ENCODE measurements at regions of chr18 and their contacts with region 1.

Region 1: DNA sequence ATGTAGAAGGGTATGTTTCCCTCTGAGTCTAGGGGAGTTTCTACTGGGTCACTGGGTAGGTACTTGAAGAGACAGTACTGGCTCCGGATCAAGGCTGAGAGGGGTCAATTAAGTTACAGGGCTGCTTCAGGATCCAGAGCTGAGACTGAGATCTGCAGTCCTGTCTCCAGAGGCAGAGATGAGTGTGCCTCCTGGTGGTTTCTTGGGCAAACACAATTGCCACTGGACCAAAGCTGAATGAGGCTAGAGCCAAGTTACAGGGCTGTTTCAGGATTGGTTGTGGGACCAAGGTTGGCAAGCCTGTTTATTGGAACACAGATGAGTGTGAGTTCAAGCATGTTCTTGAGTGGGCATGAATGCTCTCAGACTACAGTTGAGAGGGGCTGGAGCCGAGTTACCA is 157.9 kb downstream of the ADCYAP1 start:
- DNase-seq: peak; percentile 18
- H3K4me3 ChIP-seq: no peak overlapping the region
- H3K27ac ChIP-seq: no peak overlapping the region
- H3K4me1 ChIP-seq: no peaks in the 10 kb centered on the region
- H3K27me3 ChIP-seq: no peaks in the 10 kb centered on the region
- CTCF ChIP-seq: peak in 1 of 2 donors; percentile 48
- POLR2A ChIP-seq: no peak

Region 2: GRCh38 chr18:903701-904100 is 158.9 kb before region 1 on chr18:
- CTCF ChIA-PET with region 1: interaction called, 19 read pairs
- POLR2A ChIA-PET with region 1: no interaction called
- dilution Hi-C with region 1: no loop called
- intact Hi-C with region 1: no loop called
- DNase-seq: peak; percentile 42
- H3K4me3 ChIP-seq: no peak overlapping the region
- H3K27ac ChIP-seq: no peak overlapping the region
- H3K4me1 ChIP-seq: peaks cover 7% of the 10 kb centered on the region
- H3K27me3 ChIP-seq: peaks cover 51 to 72% of the 10 kb centered on the region in 2 experiments
- CTCF ChIP-seq: no peak
- POLR2A ChIP-seq: no peak

Region 3: DNA sequence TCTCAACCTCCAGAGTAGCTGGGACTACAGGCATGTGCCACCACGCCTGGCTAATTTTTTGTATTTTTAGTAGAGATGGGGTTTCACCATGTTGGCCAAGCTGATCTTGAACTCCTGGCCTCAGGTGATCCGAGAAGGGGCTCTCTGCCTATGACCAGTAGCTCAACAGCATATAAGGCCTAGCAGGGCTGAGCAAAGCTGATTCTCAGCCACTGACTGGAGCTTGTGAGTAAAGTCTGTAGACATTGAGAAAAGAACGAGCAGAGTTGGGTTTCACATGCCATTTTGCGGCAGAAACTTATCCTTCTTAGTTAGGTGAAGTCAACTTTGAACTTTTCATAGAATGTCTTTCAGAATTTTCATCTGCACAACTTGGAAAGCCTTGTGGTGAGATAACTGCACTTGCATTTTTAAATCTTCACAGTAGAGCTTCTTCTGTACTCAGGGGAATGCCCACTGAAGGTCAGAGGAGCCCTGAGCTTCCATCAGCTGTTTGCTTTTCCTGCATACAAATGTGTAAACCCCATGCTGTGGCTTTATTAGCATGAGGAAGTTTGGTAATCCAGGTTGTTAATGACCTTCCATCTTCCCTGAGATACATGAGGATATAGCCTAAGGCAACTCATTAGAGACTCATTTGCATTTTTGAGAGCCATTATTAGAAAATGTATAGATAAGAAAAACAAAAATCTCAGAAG is 906.4 kb after region 1 on chr18:
- CTCF ChIA-PET with region 1: no interaction called
- POLR2A ChIA-PET with region 1: no interaction called
- dilution Hi-C with region 1: no loop called
- intact Hi-C with region 1: no loop called
- DNase-seq: no peak
- H3K4me3 ChIP-seq: no peak overlapping the region
- H3K27ac ChIP-seq: no peak overlapping the region
- H3K4me1 ChIP-seq: no peaks in the 10 kb centered on the region
- H3K27me3 ChIP-seq: no peaks in the 10 kb centered on the region
- CTCF ChIP-seq: no peak
- POLR2A ChIP-seq: no peak

Region 4: DNA sequence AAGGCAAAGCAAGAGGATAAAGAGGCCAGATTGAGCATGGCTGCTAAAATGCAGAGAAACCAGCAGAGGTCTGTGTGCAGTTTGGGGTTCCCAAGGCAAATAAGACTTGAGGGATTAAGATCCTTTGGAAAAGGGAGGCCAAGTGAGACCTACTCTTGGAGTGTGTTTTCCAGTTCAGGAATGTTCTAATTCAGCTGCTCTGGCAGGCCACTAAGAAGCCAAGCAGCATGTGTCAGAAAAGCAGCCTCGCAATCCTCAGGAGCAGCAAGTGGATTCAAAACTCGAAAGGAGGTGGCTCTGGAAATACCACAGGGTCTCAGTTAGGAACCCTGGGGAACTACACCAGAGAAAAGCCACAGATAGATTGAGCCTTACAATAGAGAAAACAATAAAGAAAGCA is 939.6 kb after region 1 on chr18:
- CTCF ChIA-PET with region 1: no interaction called
- POLR2A ChIA-PET with region 1: no interaction called
- dilution Hi-C with region 1: no loop called
- intact Hi-C with region 1: no loop called
- DNase-seq: no peak
- H3K4me3 ChIP-seq: no peak overlapping the region
- H3K27ac ChIP-seq: no peak overlapping the region
- H3K4me1 ChIP-seq: no peaks in the 10 kb centered on the region
- H3K27me3 ChIP-seq: no peaks in the 10 kb centered on the region
- CTCF ChIP-seq: no peak
- POLR2A ChIP-seq: no peak

Measured in endothelial cell of umbilical vein (primary cell).